Activated CD4-positive, alpha-beta T cell treated with anti-CD3 and anti-CD28 coated beads for 36 hours (primary cell): ENCODE measurements at regions of chr1 and their contacts with region 1.

Region 1: DNA sequence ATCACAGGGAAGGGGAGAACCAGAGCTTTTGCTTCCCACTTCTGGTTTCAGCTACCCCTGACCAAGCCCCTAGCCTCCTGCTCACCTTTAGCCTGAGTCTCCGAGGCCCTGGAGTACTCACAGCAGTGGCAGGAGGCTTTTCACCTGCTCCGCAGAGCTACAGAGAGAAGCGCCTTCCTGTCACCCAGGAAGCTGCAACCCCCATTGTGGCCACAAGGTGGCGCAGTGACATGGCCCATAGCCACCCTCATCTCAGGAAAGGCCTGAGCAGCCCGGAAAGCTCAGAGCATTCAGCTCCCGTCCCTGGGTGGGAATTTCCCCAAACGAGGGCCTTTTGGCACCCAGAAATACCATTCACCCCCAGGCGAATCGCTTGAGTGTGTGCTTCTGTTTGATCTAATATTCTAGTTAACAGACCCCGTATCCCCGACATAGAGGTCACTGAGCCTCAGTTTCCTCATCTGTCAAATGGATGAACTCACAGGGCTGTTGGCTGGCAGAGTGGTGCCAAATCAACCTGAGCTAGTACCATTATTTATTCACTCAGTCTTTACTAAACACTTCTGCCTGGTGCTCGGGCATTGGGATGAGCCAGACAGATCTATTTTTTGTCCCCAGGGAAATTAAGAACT is 25.3 kb downstream of the A3GALT2 start:
- DNase-seq: peak; percentile 93
- ATAC-seq: peak; percentile 93
- H3K4me3 Mint-ChIP-seq: no peak overlapping the region
- H3K27ac Mint-ChIP-seq: no peak overlapping the region
- H3K4me1 Mint-ChIP-seq: peaks cover 2% of the 10 kb centered on the region
- H3K27me3 Mint-ChIP-seq: no peaks in the 10 kb centered on the region

Region 2: GRCh38 chr1:32485554-32486255 is 809.9 kb before region 1 on chr1:
- CTCF ChIA-PET with region 1: no interaction called
- POLR2A ChIA-PET with region 1: no interaction called
- intact Hi-C with region 1: no loop called
- DNase-seq: no peak
- ATAC-seq: no peak
- H3K4me3 Mint-ChIP-seq: no peak overlapping the region
- H3K27ac Mint-ChIP-seq: no peak overlapping the region
- H3K4me1 Mint-ChIP-seq: no peaks in the 10 kb centered on the region
- H3K27me3 Mint-ChIP-seq: peaks cover 3% of the 10 kb centered on the region

Region 3: GRCh38 chr1:33306648-33307493 is 11.3 kb after region 1 on chr1:
- CTCF ChIA-PET with region 1: interaction called, 17 read pairs
- POLR2A ChIA-PET with region 1: no interaction called
- intact Hi-C with region 1: no loop called
- DNase-seq: peak; percentile 21
- ATAC-seq: no peak
- H3K4me3 Mint-ChIP-seq: no peak overlapping the region
- H3K27ac Mint-ChIP-seq: no peak overlapping the region
- H3K4me1 Mint-ChIP-seq: peaks cover 7% of the 10 kb centered on the region
- H3K27me3 Mint-ChIP-seq: peaks cover 10% of the 10 kb centered on the region

Region 4: GRCh38 chr1:33334081-33334552 is 38.6 kb after region 1 on chr1:
- CTCF ChIA-PET with region 1: interaction called, 10 read pairs
- POLR2A ChIA-PET with region 1: no interaction called
- intact Hi-C with region 1: no loop called
- DNase-seq: no peak
- ATAC-seq: no peak
- H3K4me3 Mint-ChIP-seq: no peak overlapping the region
- H3K27ac Mint-ChIP-seq: no peak overlapping the region
- H3K4me1 Mint-ChIP-seq: peaks cover 18% of the 10 kb centered on the region
- H3K27me3 Mint-ChIP-seq: no peaks in the 10 kb centered on the region

Region 5: DNA sequence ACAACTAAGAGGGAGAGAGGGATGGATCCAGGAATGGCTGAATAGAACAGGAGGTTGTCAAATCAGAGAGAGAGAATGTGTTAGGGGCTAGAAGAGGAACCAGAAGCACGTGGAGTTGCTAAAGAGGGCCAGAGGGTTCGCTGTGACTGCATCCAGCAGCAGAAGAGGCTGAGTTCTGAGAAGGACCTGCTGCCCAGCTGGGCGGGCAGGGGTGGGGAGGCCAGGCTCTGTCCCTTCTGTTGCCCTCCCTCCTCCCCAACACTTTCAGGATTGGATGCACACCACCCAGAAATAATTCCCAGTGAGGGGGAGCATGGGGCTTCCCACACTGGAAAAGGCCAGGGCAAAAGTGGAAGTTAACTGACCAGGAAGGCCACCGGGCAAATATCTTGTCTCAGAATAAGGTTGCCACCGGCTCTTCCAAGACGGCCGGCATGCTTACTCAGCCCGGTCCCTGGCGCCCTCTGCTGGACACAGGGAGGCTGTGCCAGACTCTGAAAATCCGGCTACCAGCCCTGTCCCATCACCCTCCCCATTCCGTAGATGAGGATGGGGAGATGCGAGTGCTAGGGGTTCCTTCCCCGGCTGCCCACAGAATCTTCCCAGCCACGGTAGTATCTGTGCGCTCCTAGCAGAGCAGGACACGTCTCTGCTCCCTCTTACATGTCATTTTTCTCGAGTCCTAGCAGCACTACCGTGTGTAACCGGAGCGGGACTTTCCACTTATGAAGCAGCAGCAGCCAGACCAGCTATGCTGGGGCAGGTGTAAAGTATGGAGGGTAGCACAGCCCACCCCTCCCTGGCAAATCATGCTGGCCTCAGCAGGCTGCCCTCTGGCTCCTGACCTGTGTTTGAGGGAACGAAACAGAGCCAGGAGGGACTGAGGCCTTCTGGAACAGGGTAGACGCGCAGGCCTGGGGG is 72.2 kb after region 1 on chr1:
- CTCF ChIA-PET with region 1: interaction called, 56 read pairs
- POLR2A ChIA-PET with region 1: no interaction called
- intact Hi-C with region 1: loop called (anchors 1 kb)
- DNase-seq: peak; percentile 93
- ATAC-seq: peak; percentile 96
- H3K4me3 Mint-ChIP-seq: no peak overlapping the region
- H3K27ac Mint-ChIP-seq: no peak overlapping the region
- H3K4me1 Mint-ChIP-seq: peaks cover 2% of the 10 kb centered on the region
- H3K27me3 Mint-ChIP-seq: no peaks in the 10 kb centered on the region

Region 6: GRCh38 chr1:33616773-33617172 is 321.2 kb after region 1 on chr1:
- CTCF ChIA-PET with region 1: interaction called, 7 read pairs
- POLR2A ChIA-PET with region 1: no interaction called
- intact Hi-C with region 1: loop called in 1 of 2 experiments (anchors 2 kb)
- DNase-seq: no peak
- ATAC-seq: no peak
- H3K4me3 Mint-ChIP-seq: no peak overlapping the region
- H3K27ac Mint-ChIP-seq: no peak overlapping the region
- H3K4me1 Mint-ChIP-seq: peaks cover 3% of the 10 kb centered on the region
- H3K27me3 Mint-ChIP-seq: peaks cover 40% of the 10 kb centered on the region